Activated naive CD4-positive, alpha-beta T cell treated with anti-CD3 and anti-CD28 coated beads for 36 hours (primary cell): ENCODE measurements at regions of chr6 and their contacts with region 1.

Region 1: GRCh38 chr6:108558372-108559096 is 2.2 kb upstream of the FOXO3 start:
- DNase-seq: peak; percentile 97
- H3K4me3 Mint-ChIP-seq: peak overlapping the region; percentile 88
- H3K27ac Mint-ChIP-seq: peak overlapping the region; percentile 89
- H3K4me1 Mint-ChIP-seq: peaks cover 16% of the 10 kb centered on the region
- H3K27me3 Mint-ChIP-seq: peaks cover 10% of the 10 kb centered on the region

Region 2: GRCh38 chr6:107731422-107732319 is 826.9 kb before region 1 on chr6:
- CTCF ChIA-PET with region 1: no interaction called
- intact Hi-C with region 1: loop called (anchors 10 kb)
- DNase-seq: peak; percentile 43
- H3K4me3 Mint-ChIP-seq: peak overlapping the region; percentile 80
- H3K27ac Mint-ChIP-seq: peak overlapping the region; percentile 86
- H3K4me1 Mint-ChIP-seq: peaks cover 74% of the 10 kb centered on the region
- H3K27me3 Mint-ChIP-seq: no peaks in the 10 kb centered on the region

Region 3: GRCh38 chr6:108074359-108075144 is 484.0 kb before region 1 on chr6 and contains the start of gene OSTM1:
- CTCF ChIA-PET with region 1: no interaction called
- intact Hi-C with region 1: loop called (anchors 1 kb)
- DNase-seq: peak; percentile 93
- H3K4me3 Mint-ChIP-seq: peak within 1 kb of the TSS; percentile 80
- H3K27ac Mint-ChIP-seq: peak within 1 kb of the TSS; percentile 78
- H3K4me1 Mint-ChIP-seq: peaks cover 30% of the 10 kb centered on the region
- H3K27me3 Mint-ChIP-seq: no peaks in the 10 kb centered on the region
- total RNA-seq, gene OSTM1: 7.1 to 7.5 TPM

Region 4: GRCh38 chr6:108438918-108439317 is 119.6 kb before region 1 on chr6:
- CTCF ChIA-PET with region 1: no interaction called
- intact Hi-C with region 1: no loop called
- DNase-seq: no peak
- H3K4me3 Mint-ChIP-seq: no peak overlapping the region
- H3K27ac Mint-ChIP-seq: no peak overlapping the region
- H3K4me1 Mint-ChIP-seq: no peaks in the 10 kb centered on the region
- H3K27me3 Mint-ChIP-seq: peaks cover 29% of the 10 kb centered on the region

Region 5: GRCh38 chr6:108630050-108630714 is 71.6 kb after region 1 on chr6:
- CTCF ChIA-PET with region 1: no interaction called
- intact Hi-C with region 1: loop called (anchors 1 kb)
- DNase-seq: peak; percentile 37
- H3K4me3 Mint-ChIP-seq: no peak overlapping the region
- H3K27ac Mint-ChIP-seq: peak overlapping the region; percentile 35
- H3K4me1 Mint-ChIP-seq: peaks cover 45% of the 10 kb centered on the region
- H3K27me3 Mint-ChIP-seq: no peaks in the 10 kb centered on the region

Region 6: GRCh38 chr6:108798670-108799353 is 240.3 kb after region 1 on chr6:
- CTCF ChIA-PET with region 1: no interaction called
- intact Hi-C with region 1: no loop called
- DNase-seq: peak; percentile 73
- H3K4me3 Mint-ChIP-seq: peak overlapping the region; percentile 43
- H3K27ac Mint-ChIP-seq: no peak overlapping the region
- H3K4me1 Mint-ChIP-seq: peaks cover 18% of the 10 kb centered on the region
- H3K27me3 Mint-ChIP-seq: no peaks in the 10 kb centered on the region

Region 7: GRCh38 chr6:108835218-108835850 is 276.8 kb after region 1 on chr6:
- CTCF ChIA-PET with region 1: no interaction called
- intact Hi-C with region 1: loop called (anchors 5 kb)
- DNase-seq: peak; percentile 92
- H3K4me3 Mint-ChIP-seq: no peak overlapping the region
- H3K27ac Mint-ChIP-seq: no peak overlapping the region
- H3K4me1 Mint-ChIP-seq: peaks cover 19% of the 10 kb centered on the region
- H3K27me3 Mint-ChIP-seq: peaks cover 3% of the 10 kb centered on the region

Region 8: DNA sequence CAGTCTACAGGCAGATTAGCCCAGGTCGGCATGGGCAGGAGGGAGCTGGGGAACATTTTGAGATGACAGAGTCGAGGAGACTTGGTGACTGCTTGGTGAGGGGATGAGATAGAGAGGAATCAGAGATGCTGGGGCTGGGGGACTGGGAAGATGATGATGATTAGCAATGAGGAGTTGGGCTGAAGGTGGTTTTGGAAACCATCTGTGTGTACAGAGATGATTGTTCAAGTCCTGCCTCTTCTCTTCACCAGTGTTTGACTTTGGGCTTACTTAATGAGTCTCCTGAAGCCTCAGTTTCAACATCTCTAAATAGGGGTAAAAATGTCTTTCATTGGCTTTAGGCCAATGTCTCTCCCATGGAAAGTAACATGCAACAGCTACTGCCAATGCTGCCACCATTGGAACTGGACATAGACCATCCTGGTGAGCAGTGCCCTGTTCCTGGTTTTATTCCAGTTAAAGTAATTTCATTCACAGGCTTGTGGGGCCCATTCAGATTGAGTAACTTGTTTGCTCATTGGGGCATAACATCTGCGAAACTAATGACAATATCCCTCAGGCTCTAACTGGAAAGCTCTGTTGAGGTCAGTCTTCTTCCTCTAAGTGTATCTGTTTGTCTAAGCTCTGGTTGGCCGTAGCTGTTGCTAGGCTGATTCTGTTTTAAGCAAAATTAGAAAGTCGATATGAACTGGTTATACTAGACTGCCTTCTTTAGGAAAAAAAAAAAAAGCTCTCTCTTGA is 388.8 kb after region 1 on chr6:
- CTCF ChIA-PET with region 1: no interaction called
- intact Hi-C with region 1: loop called (anchors 5 kb)
- DNase-seq: no peak
- H3K4me3 Mint-ChIP-seq: no peak overlapping the region
- H3K27ac Mint-ChIP-seq: no peak overlapping the region
- H3K4me1 Mint-ChIP-seq: peaks cover 27% of the 10 kb centered on the region
- H3K27me3 Mint-ChIP-seq: no peaks in the 10 kb centered on the region

Region 9: DNA sequence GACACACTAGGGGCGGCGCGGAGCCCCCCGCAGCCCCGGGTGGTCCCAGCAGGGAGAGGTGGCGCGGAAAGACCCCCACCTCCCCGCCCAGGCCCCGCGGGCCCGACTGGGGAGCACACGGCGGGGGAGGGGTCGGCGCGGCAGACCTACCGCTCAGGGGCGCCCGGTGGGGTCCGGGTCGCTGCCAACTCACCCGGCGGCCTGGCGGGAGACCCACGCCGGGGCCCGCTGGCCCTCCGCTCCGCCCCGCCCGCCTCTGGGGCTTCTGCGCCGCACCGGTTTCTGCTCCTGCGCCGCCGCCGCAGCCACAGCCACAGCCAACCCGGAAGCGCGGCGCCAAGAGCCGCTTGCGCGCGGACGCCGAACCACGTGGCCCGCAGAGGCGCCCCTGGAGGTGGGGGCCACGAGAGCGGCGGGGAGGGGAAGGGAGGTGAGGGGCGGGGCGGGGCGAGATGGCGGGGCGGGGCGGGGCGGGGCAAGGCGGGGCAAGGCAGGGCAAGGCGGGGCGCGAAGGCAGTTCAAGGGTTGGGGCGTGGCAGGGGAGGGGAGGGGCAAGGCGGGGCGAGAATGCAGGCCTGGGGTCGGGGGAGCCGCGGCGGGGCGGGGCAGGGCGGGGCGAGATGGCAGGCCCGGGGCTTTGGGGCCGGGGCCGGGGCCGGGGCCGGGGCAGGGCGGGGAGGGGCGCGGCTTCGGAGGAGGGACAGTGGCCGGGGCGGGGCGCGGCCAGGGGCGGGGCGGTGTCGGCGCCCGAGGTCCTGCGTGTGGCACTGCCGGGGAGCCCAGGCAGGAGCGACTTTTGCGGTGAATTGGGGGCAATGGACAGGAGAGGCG is 924.6 kb after region 1 on chr6 and contains the start of gene ZBTB24:
- CTCF ChIA-PET with region 1: no interaction called
- intact Hi-C with region 1: loop called (anchors 5 kb)
- DNase-seq: peak; percentile 88
- H3K4me3 Mint-ChIP-seq: peak within 1 kb of the TSS; percentile 85
- H3K27ac Mint-ChIP-seq: peak within 1 kb of the TSS; percentile 80
- H3K4me1 Mint-ChIP-seq: peaks cover 37% of the 10 kb centered on the region
- H3K27me3 Mint-ChIP-seq: no peaks in the 10 kb centered on the region
- total RNA-seq, gene ZBTB24: 6.9 to 7.4 TPM